GM12878 (cell line): ENCODE measurements at regions of chr3 and their contacts with region 1.

Region 1: DNA sequence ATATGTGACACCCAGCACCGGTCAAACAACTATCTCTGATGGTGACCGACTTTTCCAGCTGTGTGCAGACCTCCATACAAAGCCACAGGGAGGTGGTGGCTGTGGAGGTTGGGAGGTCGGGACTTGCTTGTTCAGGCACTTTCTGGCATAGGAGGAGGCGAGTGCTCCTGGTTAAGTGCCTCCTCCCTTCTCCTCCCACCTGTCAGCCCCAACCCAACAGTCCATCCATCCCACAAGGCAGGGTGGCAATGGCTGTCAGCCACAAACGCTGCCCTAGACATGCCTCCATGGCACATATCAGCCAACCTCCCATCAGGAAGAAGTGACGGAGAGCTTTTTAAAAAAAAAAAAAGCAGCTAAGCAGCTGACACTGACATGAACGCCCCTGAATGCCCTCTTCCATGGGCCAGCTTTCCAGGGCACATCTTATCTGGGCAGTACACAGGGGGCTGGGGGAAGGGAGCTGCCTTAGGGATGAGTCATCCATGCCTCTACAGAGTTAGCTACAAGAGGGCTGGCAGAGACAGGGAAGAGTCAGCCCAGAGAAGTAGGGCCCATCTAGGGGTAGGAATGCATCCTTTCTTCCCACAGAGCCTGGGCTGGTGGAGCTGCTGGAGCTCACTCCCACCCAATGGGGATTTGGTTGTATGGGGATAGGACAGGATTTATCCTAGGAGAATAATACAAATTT is 41.2 kb downstream of the CCDC12 start:
- DNase-seq: no peak
- ATAC-seq: no peak
- H3K4me3 ChIP-seq: no peak overlapping the region
- H3K27ac ChIP-seq: no peak overlapping the region
- H3K4me1 ChIP-seq: peaks cover 54% of the 10 kb centered on the region
- H3K27me3 ChIP-seq: no peaks in the 10 kb centered on the region
- CTCF ChIP-seq: no peak
- EP300 ChIP-seq: no peak
- POLR2A ChIP-seq: peak; percentile 4; the same call in 1 of the 2 replicates
- RAD21 ChIP-seq: no peak

Region 2: GRCh38 chr3:46947981-46948791 is 12.9 kb after region 1 on chr3:
- CTCF ChIA-PET with region 1: interaction called, 27 read pairs
- POLR2A ChIA-PET with region 1: interaction called, 163 read pairs
- RAD21 ChIA-PET with region 1: interaction called, 48 read pairs
- SMC1A ChIA-PET with region 1: interaction called, 298 read pairs
- in situ Hi-C with region 1: no loop called
- intact Hi-C with region 1: no loop called
- DNase-seq: no peak
- ATAC-seq: no peak
- H3K4me3 ChIP-seq: no peak overlapping the region
- H3K27ac ChIP-seq: peak overlapping the region; percentile 73
- H3K4me1 ChIP-seq: peaks cover 45% of the 10 kb centered on the region
- H3K27me3 ChIP-seq: no peaks in the 10 kb centered on the region
- CTCF ChIP-seq: no peak
- EP300 ChIP-seq: no peak
- POLR2A ChIP-seq: no peak
- RAD21 ChIP-seq: no peak